Keratinocyte (primary cell): ENCODE measurements at regions of chr17 and their contacts with region 1.

Region 1: DNA sequence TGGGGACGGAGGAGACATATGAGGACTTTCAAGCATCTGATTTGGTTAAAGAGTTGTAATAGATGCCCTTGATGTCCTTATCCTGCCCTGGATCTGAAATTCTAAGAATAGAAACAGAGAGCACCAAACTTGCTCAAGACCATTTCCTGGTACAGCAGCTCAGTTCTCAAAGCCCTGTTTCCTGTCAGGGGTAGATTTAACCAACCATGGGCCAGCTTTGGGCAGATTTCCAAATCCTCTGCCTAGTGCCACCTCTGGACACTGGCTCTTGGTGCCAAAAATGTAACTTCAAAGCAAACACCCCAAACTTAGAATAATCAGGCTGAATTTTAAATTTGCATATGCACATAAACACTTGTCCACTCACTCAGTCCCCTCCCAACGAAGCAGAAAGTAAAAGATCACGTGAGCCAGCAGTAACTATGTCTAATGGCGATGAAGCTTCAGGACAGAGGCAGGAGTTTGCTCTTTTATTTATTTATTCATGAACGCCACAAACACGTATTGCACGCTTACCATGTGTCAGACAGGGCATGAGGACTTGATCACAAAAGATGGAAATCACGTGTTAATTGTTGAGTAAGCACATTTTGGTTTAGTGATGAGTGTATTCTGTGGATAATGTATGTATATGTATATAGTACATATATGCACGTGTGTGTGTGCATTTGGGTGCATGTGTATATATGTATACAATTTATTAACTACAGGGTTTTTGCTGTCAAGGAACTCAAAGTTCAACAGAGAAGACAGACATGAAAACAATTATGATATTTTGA is 23.1 kb upstream of the SDK2 start:
- DNase-seq: no peak
- H3K4me3 ChIP-seq: no peak overlapping the region
- H3K27ac ChIP-seq: no peak overlapping the region
- H3K4me1 ChIP-seq: no peaks in the 10 kb centered on the region
- H3K27me3 ChIP-seq: peaks cover 29% of the 10 kb centered on the region
- CTCF ChIP-seq: no peak

Region 2: DNA sequence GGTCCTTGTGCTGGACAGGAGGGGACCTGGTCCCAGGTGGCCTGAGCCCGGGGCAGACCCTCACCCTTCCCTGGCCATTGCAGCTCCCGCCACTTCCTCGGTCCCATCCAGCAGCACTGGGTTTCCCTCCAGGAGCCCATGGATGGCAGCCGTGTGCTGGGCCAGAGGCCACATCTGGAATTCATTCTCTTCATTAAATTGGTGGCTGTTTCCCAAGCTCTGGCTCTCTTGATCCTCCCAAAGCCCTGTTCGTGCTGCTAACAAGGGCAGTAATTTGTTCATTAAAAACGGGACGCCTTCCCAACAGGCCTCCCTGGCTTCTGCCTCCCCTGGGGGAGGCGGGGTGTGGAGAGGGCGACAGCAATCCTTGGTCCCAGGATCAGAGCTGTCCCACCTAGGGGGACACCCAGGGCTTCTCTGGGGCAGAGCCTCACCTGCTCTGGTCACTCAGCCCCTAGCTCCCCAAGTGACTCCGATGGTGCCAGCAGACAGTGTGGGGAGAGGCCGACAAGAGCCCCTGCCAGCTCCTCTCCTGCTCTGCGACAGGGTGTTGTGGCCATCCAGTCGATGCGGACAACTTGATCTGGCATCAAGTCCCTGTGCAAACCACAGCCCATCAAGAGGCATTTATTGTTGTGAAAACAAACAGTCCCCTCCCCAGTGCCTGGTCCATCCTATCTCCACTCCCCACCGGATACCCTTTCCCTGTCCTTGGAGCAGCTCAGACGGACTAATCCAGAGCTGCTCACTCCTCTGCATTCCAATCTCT is 67.1 kb before region 1 on chr17:
- dilution Hi-C with region 1: no loop called
- DNase-seq: no peak
- H3K4me3 ChIP-seq: no peak overlapping the region
- H3K27ac ChIP-seq: no peak overlapping the region
- H3K4me1 ChIP-seq: peaks cover 6% of the 10 kb centered on the region
- H3K27me3 ChIP-seq: no peaks in the 10 kb centered on the region
- CTCF ChIP-seq: no peak

Region 3: DNA sequence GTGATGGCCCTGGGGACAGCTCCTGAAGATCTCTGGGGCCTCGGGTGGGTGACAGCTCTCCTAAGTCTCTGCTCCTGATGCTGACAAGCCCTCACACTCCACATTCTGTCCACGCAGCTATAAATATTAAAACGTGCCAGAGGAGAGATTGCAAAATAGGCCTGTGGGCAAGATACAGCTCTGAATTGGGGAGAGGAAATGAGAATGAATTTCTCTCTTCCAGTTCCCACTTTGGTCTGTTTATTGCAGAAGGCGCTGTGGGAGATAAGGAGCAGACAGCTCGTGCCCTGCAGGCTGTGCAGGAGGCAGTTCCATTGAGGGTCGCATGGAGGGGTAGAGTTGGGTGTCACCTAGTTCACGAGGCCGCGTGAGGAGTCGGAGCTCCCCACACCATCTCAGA is 64.4 kb after region 1 on chr17:
- dilution Hi-C with region 1: loop called (anchors 10 kb)
- DNase-seq: no peak
- H3K4me3 ChIP-seq: no peak overlapping the region
- H3K27ac ChIP-seq: no peak overlapping the region
- H3K4me1 ChIP-seq: no peaks in the 10 kb centered on the region
- H3K27me3 ChIP-seq: peaks cover 12% of the 10 kb centered on the region
- CTCF ChIP-seq: no peak